ENCODE measurements at regions of chr2 and their contacts with region 1.

Region 1: GRCh38 chr2:38602732-38603401 is at the start of gene HNRNPLL:
- DNase-seq: peak; percentile 96 to 100
- H3K4me3 ChIP-seq: peak within 1 kb of the TSS; percentile 64 to 74
- H3K27ac ChIP-seq: peak within 1 kb of the TSS; percentile 94 to 97
- H3K4me1 ChIP-seq: peaks cover 0 to 32% (median 17%) of the 10 kb centered on the region in 4 donors
- H3K27me3 ChIP-seq: no peaks in the 10 kb centered on the region
- CTCF ChIP-seq: no peak

Region 2: DNA sequence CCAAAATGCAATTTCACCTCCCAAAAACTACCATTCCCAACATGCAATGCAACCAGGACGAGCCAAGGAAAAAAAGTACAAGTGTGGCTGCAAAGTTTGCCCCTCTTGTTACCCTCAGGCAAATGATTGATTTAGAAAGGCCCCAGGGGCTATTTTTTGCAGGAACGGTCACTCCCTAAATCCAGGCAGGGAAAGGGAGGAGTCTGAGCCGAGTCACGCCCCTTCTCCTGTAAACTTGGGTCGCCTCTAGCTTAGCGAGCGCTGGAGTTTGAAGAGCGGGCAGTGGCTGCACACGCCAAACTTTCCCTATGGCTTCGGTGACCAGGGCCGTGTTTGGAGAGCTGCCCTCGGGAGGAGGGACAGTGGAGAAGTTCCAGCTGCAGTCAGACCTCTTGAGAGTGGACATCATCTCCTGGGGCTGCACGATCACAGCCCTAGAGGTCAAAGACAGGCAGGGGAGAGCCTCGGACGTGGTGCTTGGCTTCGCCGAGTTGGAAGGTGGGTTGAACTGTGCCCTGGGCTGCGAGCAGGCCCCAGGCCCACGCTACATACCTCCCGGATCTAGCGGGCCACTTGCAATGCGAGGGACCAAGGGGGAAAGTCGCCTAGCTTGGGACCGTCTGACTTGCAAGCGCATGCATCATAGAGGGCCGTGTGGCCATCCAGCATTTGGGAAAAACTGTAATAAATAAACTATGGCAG is 63.1 kb after region 1 on chr2 and contains the start of gene GALM:
- intact Hi-C with region 1: loop called (anchors 5 kb)
- DNase-seq: peak; percentile 87 to 96
- H3K4me3 ChIP-seq: peak within 1 kb of the TSS; percentile 57 to 72
- H3K27ac ChIP-seq: peak within 1 kb of the TSS; percentile 66 to 73
- H3K4me1 ChIP-seq: peaks cover 0 to 36% (median 14%) of the 10 kb centered on the region in 4 donors
- H3K27me3 ChIP-seq: no peaks in the 10 kb centered on the region
- CTCF ChIP-seq: no peak

Region 3: DNA sequence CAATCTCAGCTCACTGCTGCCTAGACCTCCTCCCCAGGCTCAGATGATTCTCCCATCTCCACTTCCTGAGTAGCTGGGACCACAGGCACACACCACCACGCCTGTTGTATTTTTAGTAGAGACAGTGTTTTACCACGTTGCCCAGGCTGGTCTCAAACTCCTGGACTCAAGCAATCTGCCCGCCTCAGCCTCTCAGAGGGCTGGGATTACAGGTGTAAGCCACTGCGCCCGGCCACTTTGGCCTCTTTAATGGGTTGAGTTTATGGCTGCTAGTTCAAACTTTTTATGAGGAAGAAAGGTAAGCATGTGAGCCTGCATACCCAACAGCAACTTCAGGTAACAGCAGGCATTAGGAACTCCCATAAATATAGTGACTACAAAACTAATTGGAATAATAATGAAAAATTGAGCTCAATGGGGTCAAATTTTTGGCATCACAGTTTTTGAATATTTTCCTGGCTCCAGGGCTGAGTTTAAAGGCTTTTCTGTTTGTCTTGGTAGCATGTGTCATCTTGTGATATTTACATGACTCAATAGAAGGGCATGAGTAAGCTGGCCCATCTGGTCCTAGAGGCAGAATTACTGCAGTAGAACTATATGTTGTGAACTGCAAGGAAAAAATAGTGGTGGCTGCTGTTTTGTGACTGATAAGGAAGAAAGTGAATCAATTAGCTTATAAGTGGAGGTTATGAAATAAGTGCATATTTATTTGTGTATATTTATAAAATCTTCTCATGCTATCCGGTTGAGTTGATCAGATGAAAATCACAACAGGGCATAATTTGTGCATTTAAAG is 87.8 kb after region 1 on chr2:
- intact Hi-C with region 1: no loop called
- DNase-seq: peak in 1 of 2 donors; percentile 59
- H3K4me3 ChIP-seq: no peak overlapping the region
- H3K27ac ChIP-seq: peak overlapping the region; percentile 60 to 64
- H3K4me1 ChIP-seq: peaks cover 0 to 32% (median 14%) of the 10 kb centered on the region in 4 donors
- H3K27me3 ChIP-seq: no peaks in the 10 kb centered on the region
- CTCF ChIP-seq: no peak

Region 4: GRCh38 chr2:38750891-38751595 is 148.2 kb after region 1 on chr2 and contains the start of gene SRSF7:
- intact Hi-C with region 1: loop called (anchors 2 kb)
- DNase-seq: peak; percentile 98 to 99
- H3K4me3 ChIP-seq: peak within 1 kb of the TSS; percentile 56 to 82
- H3K27ac ChIP-seq: peak within 1 kb of the TSS; percentile 83 to 99
- H3K4me1 ChIP-seq: peaks cover 0 to 40% (median 19%) of the 10 kb centered on the region in 4 donors
- H3K27me3 ChIP-seq: no peaks in the 10 kb centered on the region
- CTCF ChIP-seq: peak in 1 of 2 experiments; percentile 22

Measured in tibial artery (tissue), 4 donors.